A673 (cell line): ENCODE measurements at regions of chr22 and their contacts with region 1.

Region 1: DNA sequence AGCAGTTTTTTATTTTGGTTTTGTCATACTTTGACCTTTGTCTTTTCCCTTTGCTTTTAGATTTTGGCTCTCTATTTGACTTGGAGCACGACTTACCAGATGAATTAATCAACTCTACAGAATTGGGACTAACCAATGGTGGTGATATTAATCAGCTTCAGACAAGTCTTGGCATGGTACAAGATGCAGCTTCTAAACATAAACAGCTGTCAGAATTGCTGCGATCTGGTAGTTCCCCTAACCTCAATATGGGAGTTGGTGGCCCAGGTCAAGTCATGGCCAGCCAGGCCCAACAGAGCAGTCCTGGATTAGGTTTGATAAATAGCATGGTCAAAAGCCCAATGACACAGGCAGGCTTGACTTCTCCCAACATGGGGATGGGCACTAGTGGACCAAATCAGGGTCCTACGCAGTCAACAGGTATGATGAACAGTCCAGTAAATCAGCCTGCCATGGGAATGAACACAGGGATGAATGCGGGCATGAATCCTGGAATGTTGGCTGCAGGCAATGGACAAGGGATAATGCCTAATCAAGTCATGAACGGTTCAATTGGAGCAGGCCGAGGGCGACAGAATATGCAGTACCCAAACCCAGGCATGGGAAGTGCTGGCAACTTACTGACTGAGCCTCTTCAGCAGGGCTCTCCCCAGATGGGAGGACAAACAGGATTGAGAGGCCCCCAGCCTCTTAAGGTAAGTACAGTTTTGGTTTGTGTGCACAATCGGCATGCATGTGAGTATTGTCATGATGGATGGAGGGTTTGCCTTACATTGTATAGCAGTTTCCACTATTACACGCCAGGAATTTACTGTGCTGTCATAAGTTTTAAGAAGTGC is 25.0 kb downstream of the EP300 start:
- DNase-seq: no peak
- H3K4me3 ChIP-seq: no peak overlapping the region
- H3K27ac ChIP-seq: no peak overlapping the region
- H3K4me1 ChIP-seq: peaks cover 5% of the 10 kb centered on the region
- H3K27me3 ChIP-seq: no peaks in the 10 kb centered on the region
- CTCF ChIP-seq: no peak

Region 2: DNA sequence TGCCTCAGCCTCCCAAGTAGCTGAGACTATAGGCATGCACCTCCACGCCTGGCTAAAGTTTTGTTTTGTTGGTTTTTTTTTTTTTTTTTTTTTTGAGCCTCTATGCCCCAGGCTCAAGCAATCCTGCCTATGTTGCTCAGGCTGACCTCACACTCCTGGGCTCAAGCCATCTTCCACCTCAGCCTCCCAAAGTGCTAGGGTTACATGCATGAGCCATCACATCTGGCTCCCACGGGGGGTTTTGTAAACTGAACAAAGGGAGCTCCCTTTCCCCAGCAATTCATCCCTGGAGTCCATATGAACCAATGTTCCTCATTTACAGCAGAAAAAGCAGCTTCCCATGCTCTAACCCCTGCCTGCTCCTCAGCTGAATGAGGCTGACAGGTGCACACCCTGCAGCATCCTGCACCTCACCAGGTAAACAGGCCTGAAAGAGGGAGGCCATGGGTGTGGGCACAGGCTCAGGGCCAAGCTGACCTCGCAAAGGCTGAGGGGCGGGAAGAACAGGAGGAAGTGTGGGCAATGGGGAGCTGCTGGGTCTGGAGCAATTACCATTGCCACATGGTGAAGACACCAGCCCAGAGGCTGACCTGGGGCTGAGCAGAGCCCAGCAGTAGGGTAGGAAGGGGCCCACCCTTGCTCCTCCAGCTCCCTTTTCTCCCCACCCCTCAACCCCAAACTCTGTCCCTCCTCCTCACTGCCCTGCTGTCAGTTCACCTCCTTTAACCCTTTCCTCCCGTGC is 108.0 kb before region 1 on chr22:
- CTCF ChIA-PET with region 1: no interaction called
- POLR2A ChIA-PET with region 1: no interaction called
- intact Hi-C with region 1: no loop called
- DNase-seq: no peak
- H3K4me3 ChIP-seq: no peak overlapping the region
- H3K27ac ChIP-seq: no peak overlapping the region
- H3K4me1 ChIP-seq: no peaks in the 10 kb centered on the region
- H3K27me3 ChIP-seq: no peaks in the 10 kb centered on the region
- CTCF ChIP-seq: no peak

Region 3: GRCh38 chr22:41217553-41218157 is 100.3 kb after region 1 on chr22:
- CTCF ChIA-PET with region 1: no interaction called
- POLR2A ChIA-PET with region 1: interaction called, 19 read pairs
- intact Hi-C with region 1: no loop called
- DNase-seq: peak; percentile 95
- H3K4me3 ChIP-seq: peak overlapping the region; percentile 33
- H3K27ac ChIP-seq: peak overlapping the region; percentile 99
- H3K4me1 ChIP-seq: peaks cover 22% of the 10 kb centered on the region
- H3K27me3 ChIP-seq: no peaks in the 10 kb centered on the region
- CTCF ChIP-seq: no peak